ENCODE measurements at regions of chr19 and their contacts with region 1.

Region 1: GRCh38 chr19:662962-663681 is at the start of gene RNF126:
- DNase-seq: peak; percentile 68 to 96 (median 90)

Region 2: GRCh38 chr19:506404-507285 is 156.5 kb before region 1 on chr19:
- intact Hi-C with region 1: no loop called
- DNase-seq: peak; percentile 94 to 100 (median 99)

Region 3: DNA sequence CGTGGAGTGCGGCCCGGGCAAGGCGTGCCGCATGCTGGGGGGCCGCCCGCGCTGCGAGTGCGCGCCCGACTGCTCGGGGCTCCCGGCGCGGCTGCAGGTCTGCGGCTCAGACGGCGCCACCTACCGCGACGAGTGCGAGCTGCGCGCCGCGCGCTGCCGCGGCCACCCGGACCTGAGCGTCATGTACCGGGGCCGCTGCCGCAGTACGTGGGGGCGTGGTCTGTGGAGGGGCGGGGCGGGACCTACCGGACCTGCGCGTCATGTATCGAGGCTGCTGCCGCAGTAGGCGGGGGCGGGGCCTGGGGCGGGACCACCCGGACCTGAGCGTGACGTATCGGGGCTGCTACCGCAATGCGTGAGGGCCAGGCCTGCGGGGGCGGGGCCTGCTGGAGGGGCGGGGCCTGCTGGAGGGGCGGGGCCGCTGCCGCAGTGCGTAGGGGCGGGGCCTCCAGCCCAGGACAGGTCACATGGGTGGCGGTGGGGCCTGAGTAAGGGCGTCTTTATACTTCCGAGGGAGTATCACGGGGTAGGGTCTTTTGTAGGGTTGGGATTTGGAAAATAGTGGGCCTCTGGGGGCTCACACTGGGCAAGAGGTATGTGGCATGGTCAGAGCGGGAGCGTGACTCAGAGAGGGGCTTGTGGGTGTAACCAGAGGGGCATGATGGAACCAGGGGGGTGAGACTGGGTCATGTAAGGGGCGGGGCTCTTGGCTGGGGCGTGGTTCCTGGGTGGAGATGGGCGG is 17.3 kb after region 1 on chr19:
- intact Hi-C with region 1: loop called (anchors 2 kb)
- DNase-seq: peak; percentile 94 to 100 (median 99)

Region 4: GRCh38 chr19:737581-738093 is 74.5 kb after region 1 on chr19:
- intact Hi-C with region 1: loop called (anchors 2 kb)
- DNase-seq: peak in 30 of 42 donors; percentile 19 to 74 (median 50)

Region 5: GRCh38 chr19:796692-797527 is 133.8 kb after region 1 on chr19 and contains the start of gene PTBP1:
- intact Hi-C with region 1: loop called (anchors 10 kb)
- DNase-seq: peak; percentile 99 to 100 (median 100)

Region 6: DNA sequence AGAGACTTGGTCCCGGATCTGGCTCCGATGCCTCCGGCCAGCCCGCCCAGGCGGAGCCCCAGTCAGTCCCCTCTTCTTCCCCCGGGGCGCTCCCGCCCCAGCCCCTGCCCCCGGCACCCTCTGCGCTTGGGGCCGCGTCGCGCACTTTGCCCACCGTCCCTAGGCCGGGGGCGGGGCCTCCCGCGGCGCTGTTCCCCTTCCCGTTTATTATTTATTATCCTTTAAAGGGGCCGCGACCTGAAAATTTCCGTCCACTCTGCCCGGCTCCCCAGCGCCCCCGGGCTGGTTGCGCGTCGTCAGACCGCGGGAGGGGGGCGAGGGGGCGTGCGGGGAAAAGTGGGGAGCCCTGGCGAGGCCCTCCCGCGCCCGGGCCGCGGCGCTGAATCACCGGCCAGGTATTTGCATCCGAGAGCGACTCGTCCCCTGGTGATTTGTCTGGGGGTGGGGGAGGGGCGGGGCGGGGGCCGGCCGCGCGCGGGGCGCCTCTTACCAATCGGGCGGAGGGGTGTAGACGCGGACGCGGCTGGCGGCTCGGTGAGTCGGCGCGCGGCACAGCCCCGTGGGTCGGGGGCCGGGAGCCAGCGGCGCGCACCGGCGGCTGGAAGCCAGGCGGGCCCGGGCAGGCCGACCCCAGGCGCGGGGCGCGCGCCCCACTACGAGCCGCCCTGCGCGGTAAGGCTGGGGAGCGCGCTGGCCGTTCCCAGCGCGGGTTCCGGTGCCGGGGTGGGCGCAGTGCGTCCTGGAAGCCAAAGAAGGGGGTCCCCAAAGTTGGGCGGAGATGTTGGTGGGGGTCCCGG is 262.6 kb after region 1 on chr19 and contains the start of gene ARID3A:
- intact Hi-C with region 1: loop called (anchors 10 kb)
- DNase-seq: peak; percentile 62 to 92 (median 81)

Measured in head of caudate nucleus (tissue), 42 donors.